HAP-1 (cell line): ENCODE measurements at regions of chr17 and their contacts with region 1.

Region 1: GRCh38 chr17:49861150-49861892 is 13.5 kb upstream of the TAC4 start:
- DNase-seq: peak; percentile 22 to 74
- H3K4me3 ChIP-seq: no peak overlapping the region
- H3K4me1 ChIP-seq: no peaks in the 10 kb centered on the region
- H3K27me3 ChIP-seq: no peaks in the 10 kb centered on the region

Region 2: GRCh38 chr17:49659661-49660382 is 201.5 kb before region 1 on chr17:
- in situ Hi-C with region 1: no loop called
- DNase-seq: no peak
- H3K4me3 ChIP-seq: no peak overlapping the region
- H3K4me1 ChIP-seq: no peaks in the 10 kb centered on the region
- H3K27me3 ChIP-seq: no peaks in the 10 kb centered on the region

Region 3: GRCh38 chr17:49997791-49998703 is 136.7 kb after region 1 on chr17:
- in situ Hi-C with region 1: loop called (anchors 5 kb)
- DNase-seq: peak; percentile 76 to 93
- H3K4me3 ChIP-seq: no peak overlapping the region
- H3K4me1 ChIP-seq: peaks cover 10% of the 10 kb centered on the region
- H3K27me3 ChIP-seq: peaks cover 22% of the 10 kb centered on the region

Region 4: DNA sequence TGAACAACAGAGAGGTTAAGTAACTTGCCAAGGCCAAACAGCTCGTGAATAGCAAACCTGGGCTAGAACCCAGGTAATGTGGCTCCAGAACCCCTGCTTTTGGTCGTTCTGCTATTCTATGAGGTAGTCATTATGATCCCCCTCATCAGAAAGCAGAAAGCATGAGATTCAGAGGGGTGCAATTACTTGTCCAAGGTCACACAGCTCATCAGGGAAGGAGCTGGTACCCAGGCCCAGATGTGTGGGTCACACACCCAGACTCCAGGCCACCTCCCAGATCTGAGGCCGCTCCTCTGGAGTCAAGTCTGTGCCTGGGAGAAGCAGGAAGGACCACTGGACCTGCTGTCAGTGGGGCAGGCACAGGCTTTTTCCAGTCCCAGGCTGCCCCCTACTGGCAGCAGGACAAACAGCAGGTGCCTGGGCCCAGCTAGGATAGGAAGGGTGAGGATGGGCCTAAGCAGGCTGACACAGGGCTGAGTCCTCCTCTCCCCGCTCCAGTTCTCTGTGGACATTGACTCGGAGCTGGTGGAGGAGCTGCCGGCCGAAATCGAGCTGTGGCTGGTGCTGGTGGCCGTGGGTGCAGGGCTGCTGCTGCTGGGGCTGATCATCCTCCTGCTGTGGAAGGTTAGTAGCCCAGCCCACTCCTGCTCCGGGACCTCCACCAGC is 226.1 kb after region 1 on chr17:
- in situ Hi-C with region 1: loop called (anchors 10 kb)
- DNase-seq: peak; percentile 50 to 81
- H3K4me3 ChIP-seq: no peak overlapping the region
- H3K4me1 ChIP-seq: no peaks in the 10 kb centered on the region
- H3K27me3 ChIP-seq: no peaks in the 10 kb centered on the region